ENCODE measurements at regions of chr5 and their contacts with region 1.

Region 1: DNA sequence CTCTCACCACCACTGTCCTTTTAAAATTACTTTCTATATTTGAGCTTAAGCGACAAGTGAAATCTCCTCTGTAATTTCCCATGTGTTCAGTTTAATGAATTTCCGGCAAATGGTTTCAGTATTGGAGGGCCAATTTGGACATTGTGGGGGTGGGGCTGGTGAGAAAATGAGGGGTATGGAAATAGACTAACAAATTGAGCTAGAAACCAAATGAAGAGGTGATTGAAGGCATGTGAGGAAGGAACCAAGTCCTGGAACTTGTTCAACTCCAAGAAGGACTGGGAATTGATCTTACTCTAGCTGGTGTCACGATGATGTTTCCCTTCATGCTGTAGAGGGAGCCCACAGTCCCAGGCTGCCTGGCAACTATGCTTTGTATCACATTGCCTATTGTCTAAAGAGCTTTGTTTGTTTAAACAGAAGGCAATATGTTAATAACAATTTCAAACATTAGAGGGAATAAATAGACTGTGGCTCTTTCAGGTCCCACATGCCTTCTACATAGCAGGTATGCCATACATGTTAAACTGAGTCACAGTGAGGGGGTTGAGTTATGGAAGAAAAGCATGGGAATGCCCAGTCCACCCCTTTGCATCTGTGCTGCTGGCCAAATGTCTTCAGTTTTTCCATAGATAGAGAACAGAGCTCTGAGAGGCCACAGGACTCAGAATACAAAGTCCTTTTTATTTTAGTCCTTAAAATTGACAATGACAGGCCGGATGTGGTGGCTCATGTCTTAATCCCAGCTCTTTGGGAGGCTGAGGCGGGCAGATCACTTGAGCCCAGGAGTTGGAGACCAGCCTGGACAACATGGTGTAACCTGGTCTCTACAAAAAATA is 25.0 kb upstream of the MATR3 start:
- DNase-seq: no peak
- ATAC-seq: peak in 6 of 8 donors; percentile 19 to 43 (median 35)
- H3K4me3 ChIP-seq: no peak overlapping the region
- H3K27ac ChIP-seq: peak overlapping the region; percentile 31 to 79 (median 68)
- H3K4me1 ChIP-seq: peaks cover 11 to 46% (median 29%) of the 10 kb centered on the region in 9 donors
- H3K27me3 ChIP-seq: no peaks in the 10 kb centered on the region
- CTCF ChIP-seq: peak in 5 of 9 donors; percentile 8 to 48 (median 42)

Region 2: DNA sequence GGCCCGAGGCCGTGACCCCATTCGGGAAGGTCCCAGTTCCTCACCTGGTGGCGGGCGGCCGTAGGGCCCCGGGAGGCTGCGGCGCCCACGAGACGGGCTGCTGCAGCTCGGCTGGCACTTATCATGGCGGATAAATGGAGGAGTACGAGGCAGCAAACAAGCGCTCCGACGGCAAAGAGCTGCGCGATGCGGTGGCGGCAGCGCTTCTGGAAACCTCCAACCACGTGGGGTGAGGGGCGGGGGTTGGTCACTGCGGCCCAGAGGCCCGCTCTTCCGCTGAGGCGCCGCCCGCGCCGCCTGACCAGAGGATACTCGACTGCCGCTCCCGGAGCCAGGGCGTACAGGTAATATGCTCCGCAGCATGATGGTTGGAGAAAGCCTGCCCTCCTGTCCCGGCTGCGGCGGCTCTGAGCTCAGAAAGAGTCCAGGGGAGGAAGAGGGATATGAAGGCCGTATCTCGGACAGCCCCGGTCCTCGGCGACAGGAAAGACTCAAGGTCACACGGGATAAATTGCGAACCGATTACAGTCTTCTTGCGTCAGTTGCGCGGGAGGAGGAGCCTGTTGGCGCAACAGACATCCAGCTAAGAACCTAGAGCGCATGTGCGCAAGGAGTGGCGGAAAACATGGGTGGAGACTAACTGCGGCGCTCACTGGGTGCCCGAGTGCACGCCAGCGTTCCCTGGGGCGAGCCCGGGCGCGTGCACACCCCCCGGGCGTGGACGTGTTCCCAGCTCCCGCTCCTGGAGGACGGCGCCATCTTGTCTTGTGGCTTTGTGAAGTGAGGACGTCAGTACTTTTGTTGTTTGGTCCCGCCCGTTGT is 693.2 kb before region 1 on chr5 and contains the start of gene HSPA9:
- intact Hi-C with region 1: loop called in 7 of 10 experiments (anchors 2 to 10 kb)
- DNase-seq: peak; percentile 96 to 99
- ATAC-seq: peak; percentile 96 to 98 (median 97)
- H3K4me3 ChIP-seq: peak within 1 kb of the TSS; percentile 69 to 98 (median 86)
- H3K27ac ChIP-seq: peak within 1 kb of the TSS; percentile 93 to 99 (median 98)
- H3K4me1 ChIP-seq: peaks cover 0 to 38% (median 20%) of the 10 kb centered on the region in 9 donors
- H3K27me3 ChIP-seq: no peaks in the 10 kb centered on the region
- CTCF ChIP-seq: peak in 2 of 9 donors; percentile 9 to 17
- total RNA-seq, gene HSPA9: 246 to 415 (median 324) TPM

Region 3: DNA sequence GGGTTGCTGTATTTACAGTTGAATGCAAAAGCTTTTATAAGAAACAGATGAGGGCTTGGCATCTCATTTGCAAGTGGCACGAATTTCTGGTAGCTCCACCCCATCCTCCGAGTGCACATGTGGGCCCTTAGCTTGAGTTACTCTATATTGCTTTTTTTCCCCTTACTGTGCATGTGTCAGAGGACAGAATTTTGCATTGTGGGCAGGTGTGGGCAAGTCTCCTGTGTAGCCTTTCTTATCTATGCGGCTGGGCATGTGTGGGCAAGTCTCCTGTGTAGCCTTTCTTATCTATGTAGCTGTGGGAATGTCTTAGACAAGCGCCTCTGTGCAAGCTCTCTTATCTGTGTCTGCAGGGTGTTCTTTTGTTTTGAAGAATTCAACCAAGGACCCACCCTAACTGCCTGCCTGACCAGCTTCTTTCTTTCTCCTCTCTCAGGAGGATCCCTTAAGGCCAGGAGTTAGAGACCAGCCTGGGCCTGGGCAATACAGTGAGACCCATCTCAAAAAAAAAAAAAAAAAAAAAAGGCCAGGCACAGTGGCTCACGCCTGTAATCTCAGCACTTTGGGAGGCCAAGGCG is 36.3 kb before region 1 on chr5:
- intact Hi-C with region 1: no loop called
- DNase-seq: no peak
- ATAC-seq: no peak
- H3K4me3 ChIP-seq: no peak overlapping the region
- H3K27ac ChIP-seq: no peak overlapping the region
- H3K4me1 ChIP-seq: no peaks in the 10 kb centered on the region
- H3K27me3 ChIP-seq: no peaks in the 10 kb centered on the region
- CTCF ChIP-seq: no peak

Region 4: DNA sequence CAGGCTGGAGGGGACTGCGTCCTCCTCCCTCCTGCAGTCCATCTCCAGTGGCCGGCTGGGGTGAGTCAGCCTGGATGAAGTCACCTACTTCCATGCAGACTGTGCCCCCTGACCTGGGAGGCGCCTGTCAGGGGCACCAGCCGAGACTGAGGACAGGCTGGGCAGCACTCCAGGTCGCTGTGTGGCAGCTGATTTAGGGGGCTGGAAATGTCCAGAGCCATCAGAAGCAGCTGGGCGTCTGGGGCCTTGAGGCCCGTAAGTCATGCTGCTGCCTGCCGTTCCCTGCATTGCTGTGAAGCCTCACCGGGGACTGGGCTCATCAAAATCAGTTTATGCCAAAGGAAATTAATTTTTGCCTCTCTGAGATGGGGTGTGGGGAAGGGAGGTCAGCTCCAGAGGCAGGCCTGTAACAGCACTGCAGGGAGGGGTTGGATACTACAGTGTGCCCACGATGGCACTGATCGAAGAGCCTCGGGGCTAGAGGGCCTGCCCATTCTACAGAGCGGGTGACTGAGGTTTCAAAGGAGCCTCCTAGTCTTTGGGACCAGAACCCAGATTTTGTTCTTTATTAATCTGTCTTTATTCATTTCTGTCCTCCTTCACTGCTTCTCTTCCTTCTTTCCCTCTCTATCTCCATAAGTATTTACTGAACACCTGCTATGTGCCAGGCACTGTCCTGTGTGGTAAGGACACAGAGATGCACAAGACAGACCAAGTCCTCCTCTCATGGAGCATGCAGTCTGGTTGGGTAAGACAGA is 456.7 kb after region 1 on chr5:
- intact Hi-C with region 1: no loop called
- DNase-seq: peak; percentile 46 to 58
- ATAC-seq: peak; percentile 81 to 98 (median 86)
- H3K4me3 ChIP-seq: no peak overlapping the region
- H3K27ac ChIP-seq: peak overlapping the region in 2 of 10 donors; percentile 42 to 49
- H3K4me1 ChIP-seq: peaks cover 0 to 10% (median 3%) of the 10 kb centered on the region in 9 donors
- H3K27me3 ChIP-seq: no peaks in the 10 kb centered on the region
- CTCF ChIP-seq: no peak

Measured in heart right ventricle (tissue), 16 donors.